ENCODE measurements at regions of chrX and their contacts with region 1.

Region 1: DNA sequence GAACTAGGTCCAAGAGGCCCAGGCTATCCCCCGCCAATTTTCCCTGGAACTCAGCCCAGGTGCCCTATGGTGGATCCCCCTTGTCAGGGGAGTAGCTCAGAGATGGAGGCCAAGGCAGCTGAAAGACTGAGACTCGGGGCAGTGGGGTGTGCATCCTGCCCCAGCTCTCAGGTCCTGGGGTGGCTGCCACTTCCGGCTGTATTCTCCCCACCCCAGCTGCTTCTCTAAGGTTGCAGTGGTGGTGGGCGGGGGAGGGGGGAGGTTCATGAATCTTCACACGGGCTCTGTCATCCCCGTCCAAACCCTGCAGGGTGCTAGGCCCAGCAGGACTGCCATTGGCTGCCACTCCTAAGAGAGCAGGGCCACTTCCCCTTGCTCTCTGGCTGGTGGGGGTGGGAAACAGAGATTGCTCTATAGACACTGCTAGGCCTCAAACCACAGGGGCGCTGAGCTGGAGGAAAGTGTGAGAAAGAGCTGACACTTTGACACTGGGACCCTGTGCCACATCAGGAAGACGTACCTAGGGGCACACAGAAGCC is 1.5 kb downstream of the SASH3 start:
- DNase-seq: peak; percentile 70
- H3K4me3 Mint-ChIP-seq: peak overlapping the region; percentile 82
- H3K27ac Mint-ChIP-seq: peak overlapping the region; percentile 88
- H3K4me1 Mint-ChIP-seq: peaks cover 59% of the 10 kb centered on the region
- H3K27me3 Mint-ChIP-seq: no peaks in the 10 kb centered on the region

Region 2: DNA sequence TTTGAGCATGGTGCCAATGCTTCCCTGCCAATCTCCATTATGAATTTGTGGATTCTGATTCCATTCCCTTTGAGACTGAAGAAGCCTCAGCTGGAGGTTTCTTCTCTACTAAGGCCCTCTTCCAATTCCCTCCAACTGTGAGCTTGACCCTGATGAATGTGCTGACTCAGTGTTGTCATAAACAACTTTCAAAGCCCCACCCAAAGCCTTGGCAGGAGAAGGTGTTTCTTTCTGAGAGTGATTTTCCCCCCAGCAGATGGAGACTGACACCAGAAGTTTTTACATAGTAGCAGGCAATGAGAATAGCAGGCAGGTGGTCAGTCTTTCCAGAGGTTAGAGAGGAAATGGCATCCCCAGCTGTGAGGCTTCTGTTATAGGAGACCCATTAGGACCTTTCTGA is 188.1 kb before region 1 on chrX:
- intact Hi-C with region 1: no loop called
- DNase-seq: no peak
- H3K4me3 Mint-ChIP-seq: no peak overlapping the region
- H3K27ac Mint-ChIP-seq: no peak overlapping the region
- H3K4me1 Mint-ChIP-seq: peaks cover 7% of the 10 kb centered on the region
- H3K27me3 Mint-ChIP-seq: no peaks in the 10 kb centered on the region

Region 3: DNA sequence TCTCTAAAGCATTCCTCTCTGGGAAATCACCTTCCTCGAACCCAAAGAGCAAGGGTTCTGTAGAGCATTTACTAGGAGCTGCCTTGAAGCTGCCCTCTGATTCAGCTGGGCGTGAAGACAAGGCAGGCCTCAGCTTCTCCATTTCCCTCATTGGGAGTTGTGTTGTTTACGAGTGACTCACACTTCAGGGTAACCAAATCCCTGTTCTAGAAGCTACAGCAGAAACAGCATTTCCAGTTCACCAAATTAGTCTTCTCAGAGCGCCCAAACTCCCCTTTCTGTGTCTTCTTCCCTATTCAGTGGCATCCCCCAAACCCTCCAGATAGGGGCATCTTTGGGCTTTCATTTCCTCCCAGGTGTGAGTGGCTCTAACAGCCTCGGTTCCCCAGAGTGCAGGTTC is 43.3 kb before region 1 on chrX:
- intact Hi-C with region 1: loop called (anchors 1 kb)
- DNase-seq: no peak
- H3K4me3 Mint-ChIP-seq: no peak overlapping the region
- H3K27ac Mint-ChIP-seq: peak overlapping the region; percentile 61
- H3K4me1 Mint-ChIP-seq: peaks cover 32% of the 10 kb centered on the region
- H3K27me3 Mint-ChIP-seq: no peaks in the 10 kb centered on the region

Region 4: DNA sequence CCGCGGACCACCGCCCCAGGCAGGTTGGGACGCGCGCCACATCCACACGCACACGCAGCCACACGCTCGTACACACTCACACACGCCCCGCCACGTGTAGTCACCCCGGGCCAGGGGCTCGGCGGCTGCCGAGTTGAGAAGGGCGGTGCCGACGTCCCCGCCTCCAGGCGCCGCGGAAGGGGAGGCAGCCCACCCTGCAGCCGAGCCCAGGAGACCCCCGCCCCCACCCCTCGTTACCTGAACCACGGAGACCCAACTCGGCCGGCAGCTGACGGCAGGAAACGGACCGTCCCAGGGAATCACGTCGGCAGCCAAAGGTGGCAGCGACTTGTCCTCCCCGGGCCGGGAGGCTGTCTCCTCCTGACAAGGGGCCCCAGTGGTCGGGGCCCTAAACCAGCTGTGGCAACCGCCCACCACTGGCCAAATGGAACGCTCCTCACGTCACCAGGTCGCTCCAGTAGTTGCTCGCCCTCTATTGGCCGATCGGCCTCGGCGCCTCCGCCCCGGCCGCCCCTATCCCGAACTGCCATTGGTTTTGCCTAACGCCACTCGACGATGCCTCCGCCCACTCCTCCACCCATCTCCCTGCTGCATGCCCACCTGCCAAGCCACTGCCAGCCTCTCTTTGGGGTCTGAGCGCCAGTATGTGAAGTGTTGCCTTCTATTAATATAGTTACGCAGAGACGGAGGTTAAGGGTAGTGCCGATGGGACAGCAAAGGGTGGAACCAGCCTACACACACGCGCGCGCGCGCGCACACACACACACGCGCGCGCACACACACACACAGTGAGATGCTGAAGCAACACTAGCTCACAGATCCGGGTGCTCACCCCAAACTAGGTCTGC is 62.5 kb after region 1 on chrX and contains the start of gene ZDHHC9:
- intact Hi-C with region 1: loop called (anchors 5 kb)
- DNase-seq: peak; percentile 82
- H3K4me3 Mint-ChIP-seq: peak within 1 kb of the TSS; percentile 86
- H3K27ac Mint-ChIP-seq: peak within 1 kb of the TSS; percentile 85
- H3K4me1 Mint-ChIP-seq: peaks cover 16% of the 10 kb centered on the region
- H3K27me3 Mint-ChIP-seq: no peaks in the 10 kb centered on the region
- total RNA-seq, gene ZDHHC9: 13.0 and 13.9 TPM in 2 replicates

Region 5: DNA sequence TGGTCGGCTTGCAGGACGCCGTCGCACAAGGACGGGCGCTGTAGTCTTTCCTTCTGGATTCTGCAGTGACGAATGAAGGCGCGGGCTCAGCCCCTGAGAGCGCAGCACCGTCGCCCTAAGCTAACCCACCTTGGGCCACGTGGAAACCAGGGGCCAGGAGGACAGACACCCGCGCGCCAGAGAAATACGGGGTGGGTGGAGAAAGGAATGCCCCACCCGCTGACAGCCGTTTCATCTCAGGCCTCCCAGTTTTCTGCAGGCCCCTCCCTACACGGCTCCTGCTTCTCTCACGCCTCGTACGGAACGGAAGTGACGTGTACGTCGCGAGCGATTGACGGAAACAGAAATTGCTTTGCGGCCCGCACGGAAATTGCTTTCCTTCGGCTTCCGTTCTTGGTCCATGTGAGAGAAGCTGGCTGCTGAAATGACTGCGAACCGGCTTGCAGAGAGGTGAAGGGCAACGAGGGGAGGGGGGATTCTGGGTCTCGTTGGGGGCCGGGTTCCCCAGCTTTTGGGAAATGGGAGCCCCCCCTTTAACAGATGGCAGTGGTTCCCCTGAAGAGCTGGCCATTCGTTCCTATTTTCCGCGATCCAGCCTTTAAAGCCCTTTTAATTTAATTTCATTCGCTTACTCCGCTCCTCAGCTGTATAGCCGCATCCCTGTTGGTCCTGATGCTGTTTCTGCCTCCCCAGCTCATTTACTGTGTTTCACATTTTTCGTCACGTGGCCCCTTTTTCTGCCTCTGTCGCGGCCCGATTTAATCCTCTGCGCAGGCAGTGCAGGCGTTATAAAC is 124.8 kb after region 1 on chrX and contains the start of gene UTP14A:
- intact Hi-C with region 1: loop called (anchors 5 kb)
- DNase-seq: peak; percentile 83
- H3K4me3 Mint-ChIP-seq: peak within 1 kb of the TSS; percentile 90
- H3K27ac Mint-ChIP-seq: peak within 1 kb of the TSS; percentile 86
- H3K4me1 Mint-ChIP-seq: peaks cover 14% of the 10 kb centered on the region
- H3K27me3 Mint-ChIP-seq: no peaks in the 10 kb centered on the region
- total RNA-seq, gene UTP14A: 46.6 and 49.9 TPM in 2 replicates

Region 6: DNA sequence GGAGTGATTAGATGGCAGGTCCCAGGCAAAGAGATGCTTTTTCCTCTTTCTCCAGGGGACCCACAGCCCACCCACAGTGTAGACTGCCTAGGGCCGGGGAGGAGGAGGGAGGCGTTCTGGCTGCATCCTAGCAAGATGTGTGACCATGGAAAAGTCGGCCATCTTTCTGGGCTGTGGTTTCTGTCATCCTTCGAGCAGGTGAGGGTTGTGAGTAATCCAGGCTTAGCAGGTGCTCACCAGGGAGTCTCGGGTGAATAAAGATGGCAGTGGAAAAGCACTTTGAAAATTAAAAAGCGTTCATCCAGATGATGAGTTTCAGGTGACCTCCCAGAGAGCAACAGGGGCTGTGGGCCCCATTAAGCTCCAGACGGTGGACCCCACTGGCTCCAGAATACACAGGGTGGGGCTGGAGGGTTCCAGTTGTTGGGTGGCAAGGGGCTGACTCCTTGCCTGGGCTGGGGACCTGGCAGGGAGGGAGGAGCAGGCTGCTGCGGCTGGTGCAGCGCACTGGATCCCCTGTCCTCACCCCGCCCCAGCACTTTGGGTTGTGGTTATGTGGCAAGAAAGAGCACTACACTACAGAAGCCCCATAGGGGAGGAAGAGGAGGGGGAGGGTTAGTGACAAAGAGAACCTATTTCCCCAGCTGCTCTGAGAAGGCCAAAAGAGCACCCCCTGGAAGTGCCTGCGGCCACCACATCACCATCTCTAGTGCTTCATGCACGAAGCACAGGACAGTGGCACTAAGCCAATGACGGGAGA is 305.4 kb after region 1 on chrX:
- intact Hi-C with region 1: loop called (anchors 2 kb)
- DNase-seq: peak; percentile 63
- H3K4me3 Mint-ChIP-seq: peak overlapping the region; percentile 80
- H3K27ac Mint-ChIP-seq: peak overlapping the region; percentile 91
- H3K4me1 Mint-ChIP-seq: peaks cover 46% of the 10 kb centered on the region
- H3K27me3 Mint-ChIP-seq: no peaks in the 10 kb centered on the region

Measured in activated T-helper 2 cell treated with anti-CD3 and anti-CD28 coated beads, Interferon-gamma antibody, Interleukin-2, Interleukin-4, amounts not matched to agents 10 μg/mL and 5 μg/mL and 100 μg/mL, durations not matched to agents 14 hours and 24 hours and 36 hours (primary cell).